ENCODE measurements at regions of chr6 and their contacts with region 1.

Region 1: DNA sequence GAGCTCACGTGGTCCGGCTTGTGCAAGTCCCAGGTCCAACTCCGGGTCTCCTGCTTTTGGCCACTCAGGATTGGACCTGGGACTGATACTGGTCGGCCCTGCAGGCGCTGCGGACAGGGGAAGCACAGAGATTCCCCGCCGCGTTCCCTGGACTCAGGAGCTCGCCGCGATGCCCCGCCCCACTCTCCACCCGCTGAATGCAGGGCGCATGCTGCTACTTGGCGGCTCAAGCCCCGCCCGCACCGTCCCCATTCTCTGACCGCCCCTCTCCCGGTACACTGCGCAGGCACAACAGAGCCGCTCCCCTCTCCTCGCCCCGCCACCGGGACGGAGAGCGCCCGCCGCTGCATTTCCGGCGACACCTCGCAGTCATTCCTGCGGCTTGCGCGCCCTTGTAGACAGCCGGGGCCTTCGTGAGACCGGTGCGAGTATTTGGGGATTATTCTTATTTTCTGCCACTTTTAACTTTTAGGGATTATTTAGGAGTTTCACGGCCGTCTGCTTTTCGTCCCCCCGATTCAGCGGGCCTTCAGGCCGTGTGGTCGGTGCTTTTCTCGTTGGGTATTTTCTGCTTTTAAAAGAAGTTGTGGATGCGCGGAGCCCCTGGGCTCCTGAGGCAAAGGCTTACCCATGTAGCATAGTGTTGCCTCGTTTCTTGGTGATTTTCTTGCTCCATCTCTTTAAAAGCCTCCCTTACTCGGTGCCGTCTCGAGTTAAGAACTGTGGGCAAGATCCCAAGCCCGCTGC is at the start of gene TMEM14C:
- DNase-seq: peak; percentile 96
- ATAC-seq: peak; percentile 96
- H3K4me3 ChIP-seq: peak within 1 kb of the TSS; percentile 88
- H3K27ac ChIP-seq: peak within 1 kb of the TSS; percentile 67
- H3K4me1 ChIP-seq: peaks cover 24% of the 10 kb centered on the region
- H3K27me3 ChIP-seq: no peaks in the 10 kb centered on the region
- CTCF ChIP-seq: no peak
- total RNA-seq, gene TMEM14C: 85.8 and 87.8 TPM in 2 replicates

Region 2: DNA sequence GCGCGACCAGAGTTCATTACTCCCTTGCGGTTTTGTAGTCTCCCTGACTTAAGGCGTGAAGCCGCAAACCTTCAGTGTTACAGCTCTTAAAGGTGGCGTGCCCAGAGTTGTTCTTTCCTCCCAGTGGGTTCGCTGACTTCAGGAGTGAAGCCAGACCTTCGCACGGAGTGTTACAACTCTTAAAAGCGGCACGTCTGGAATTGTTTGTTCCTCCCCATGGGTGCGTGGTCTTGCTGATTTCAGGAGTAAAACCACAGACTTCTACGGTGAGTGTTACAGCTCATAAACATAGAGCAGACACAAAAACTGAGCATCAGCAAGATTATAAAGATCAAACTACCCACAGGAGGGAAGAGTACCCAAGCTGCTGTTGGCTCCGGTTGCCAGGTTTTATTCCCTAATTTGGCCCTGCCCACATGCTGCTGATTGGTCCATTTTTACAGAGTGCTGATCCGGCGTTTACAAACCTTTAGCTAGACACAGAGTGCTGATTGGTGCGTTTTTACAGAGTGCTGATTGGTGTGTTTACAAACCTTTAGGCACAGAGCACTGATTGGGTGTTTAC is 10.2 kb after region 1 on chr6:
- CTCF ChIA-PET with region 1: no interaction called
- POLR2A ChIA-PET with region 1: no interaction called
- intact Hi-C with region 1: loop called (anchors 1 kb)
- DNase-seq: no peak
- ATAC-seq: no peak
- H3K4me3 ChIP-seq: no peak overlapping the region
- H3K27ac ChIP-seq: peak overlapping the region; percentile 69; the same call in 1 of the 2 replicates
- H3K4me1 ChIP-seq: peaks cover 25% of the 10 kb centered on the region
- H3K27me3 ChIP-seq: no peaks in the 10 kb centered on the region
- CTCF ChIP-seq: no peak

Region 3: DNA sequence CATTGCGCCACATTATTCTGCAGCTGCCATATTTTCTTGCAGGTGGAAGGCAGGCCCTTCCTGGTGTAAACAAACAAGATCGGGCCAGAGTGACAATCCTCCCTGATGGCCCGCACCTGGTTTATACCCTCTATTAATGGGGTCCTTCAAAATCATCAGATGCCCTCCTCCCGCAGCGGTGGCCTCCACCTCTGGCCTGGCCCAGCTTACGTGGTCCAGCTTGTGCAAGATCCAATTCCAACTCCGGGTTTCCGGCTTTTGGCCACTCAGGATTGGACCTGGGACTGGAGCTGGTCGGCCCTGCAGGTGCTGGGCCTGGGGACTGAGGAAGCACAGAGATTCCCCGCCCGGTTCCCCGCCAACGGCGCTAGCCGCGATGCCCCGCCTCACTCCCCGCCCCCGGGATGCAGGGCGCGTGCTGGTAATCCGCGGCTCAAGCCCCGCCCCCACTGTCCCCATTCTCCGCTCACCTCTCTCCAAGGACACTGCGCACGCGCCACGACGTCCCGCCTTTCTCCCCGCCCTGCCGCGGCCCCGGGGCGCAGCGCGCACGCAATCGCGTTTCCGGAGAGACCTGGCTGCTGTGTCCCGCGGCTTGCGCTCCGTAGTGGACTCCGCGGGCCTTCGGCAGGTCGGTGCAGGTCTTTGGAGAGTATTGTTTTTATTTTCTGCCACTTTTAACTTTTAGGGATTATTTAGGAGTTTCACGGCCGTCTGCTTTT is 24.4 kb after region 1 on chr6 and contains the start of gene TMEM14B:
- CTCF ChIA-PET with region 1: no interaction called
- POLR2A ChIA-PET with region 1: interaction called, 15 read pairs
- intact Hi-C with region 1: loop called (anchors 1 kb)
- DNase-seq: peak; percentile 98
- ATAC-seq: peak; percentile 95
- H3K4me3 ChIP-seq: peak within 1 kb of the TSS; percentile 99
- H3K27ac ChIP-seq: peak within 1 kb of the TSS; percentile 49
- H3K4me1 ChIP-seq: peaks cover 25% of the 10 kb centered on the region
- H3K27me3 ChIP-seq: no peaks in the 10 kb centered on the region
- CTCF ChIP-seq: no peak
- total RNA-seq, gene TMEM14B: 93.8 and 115 TPM in 2 replicates

Region 4: GRCh38 chr6:10939840-10940239 is 216.8 kb after region 1 on chr6:
- CTCF ChIA-PET with region 1: interaction called, 13 read pairs
- POLR2A ChIA-PET with region 1: no interaction called
- intact Hi-C with region 1: no loop called
- DNase-seq: no peak
- ATAC-seq: no peak
- H3K4me3 ChIP-seq: no peak overlapping the region
- H3K27ac ChIP-seq: no peak overlapping the region
- H3K4me1 ChIP-seq: no peaks in the 10 kb centered on the region
- H3K27me3 ChIP-seq: peaks cover 32% of the 10 kb centered on the region
- CTCF ChIP-seq: no peak

Region 5: GRCh38 chr6:11277275-11278206 is 554.5 kb after region 1 on chr6:
- CTCF ChIA-PET with region 1: no interaction called
- POLR2A ChIA-PET with region 1: no interaction called
- intact Hi-C with region 1: no loop called
- DNase-seq: peak; percentile 69
- ATAC-seq: peak; percentile 42
- H3K4me3 ChIP-seq: no peak overlapping the region
- H3K27ac ChIP-seq: peak overlapping the region; percentile 13
- H3K4me1 ChIP-seq: peaks cover 39% of the 10 kb centered on the region
- H3K27me3 ChIP-seq: no peaks in the 10 kb centered on the region
- CTCF ChIP-seq: no peak

Measured in PC-3 (cell line).